AG04449 (cell line): ENCODE measurements at regions of chr7 and their contacts with region 1.

Region 1: GRCh38 chr7:40134428-40135316 is at the starts of genes MPLKIP and SUGCT:
- DNase-seq: peak; percentile 54
- H3K4me3 ChIP-seq: peak within 1 kb of the TSS; percentile 80
- CTCF ChIP-seq: peak; percentile 83

Region 2: DNA sequence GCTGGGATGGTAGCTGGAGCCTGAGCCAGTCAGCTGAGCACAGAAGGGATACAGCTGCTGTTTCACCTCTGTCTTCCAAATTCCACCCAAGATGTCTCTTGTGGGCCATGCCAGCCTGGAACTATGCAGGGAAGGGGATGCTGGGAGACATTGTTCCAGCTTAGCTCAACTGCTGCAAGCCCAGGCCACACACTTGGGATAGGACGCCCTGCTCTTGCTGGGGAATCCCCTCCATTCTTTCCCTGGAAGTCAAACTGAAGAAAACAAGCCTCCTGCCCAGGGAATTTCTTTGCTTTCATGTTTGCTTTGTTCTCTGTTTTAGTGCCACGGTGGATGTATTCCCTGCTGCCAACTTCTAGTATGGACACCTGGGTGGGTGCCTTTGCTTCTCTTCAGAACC is 239.8 kb before region 1 on chr7:
- CTCF ChIA-PET with region 1: interaction called, 14 read pairs
- POLR2A ChIA-PET with region 1: interaction called, 3 read pairs
- DNase-seq: no peak
- H3K4me3 ChIP-seq: no peak overlapping the region
- CTCF ChIP-seq: no peak

Region 3: GRCh38 chr7:40033826-40034225 is 100.8 kb before region 1 on chr7:
- CTCF ChIA-PET with region 1: no interaction called
- POLR2A ChIA-PET with region 1: no interaction called
- DNase-seq: no peak
- H3K4me3 ChIP-seq: no peak overlapping the region
- CTCF ChIP-seq: no peak

Region 4: DNA sequence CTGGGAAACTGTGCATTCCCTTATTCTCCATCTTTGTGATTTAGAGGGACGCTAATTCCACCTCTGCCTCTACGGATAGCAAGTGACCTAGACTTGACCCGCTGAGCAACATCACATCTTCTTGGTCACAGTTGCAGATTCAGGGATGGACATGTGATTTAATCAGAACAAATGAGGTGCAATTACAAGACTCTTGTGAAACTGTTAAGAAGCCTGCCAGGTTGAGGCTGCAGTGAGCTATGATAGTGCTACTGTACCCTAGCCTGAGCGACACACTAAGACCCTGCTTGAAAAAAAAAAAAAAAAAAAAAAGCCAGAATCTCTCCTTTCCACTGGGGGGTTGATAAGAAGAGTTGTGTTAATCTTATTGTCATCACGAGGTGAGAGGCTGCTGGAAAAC is 14.7 kb before region 1 on chr7:
- CTCF ChIA-PET with region 1: interaction called, 43 read pairs
- POLR2A ChIA-PET with region 1: no interaction called
- DNase-seq: no peak
- H3K4me3 ChIP-seq: no peak overlapping the region
- CTCF ChIP-seq: no peak

Region 5: GRCh38 chr7:40147371-40148246 is 12.9 kb after region 1 on chr7:
- CTCF ChIA-PET with region 1: interaction called, 19 read pairs
- POLR2A ChIA-PET with region 1: interaction called, 3 read pairs
- DNase-seq: no peak
- H3K4me3 ChIP-seq: no peak overlapping the region
- CTCF ChIP-seq: no peak

Region 6: DNA sequence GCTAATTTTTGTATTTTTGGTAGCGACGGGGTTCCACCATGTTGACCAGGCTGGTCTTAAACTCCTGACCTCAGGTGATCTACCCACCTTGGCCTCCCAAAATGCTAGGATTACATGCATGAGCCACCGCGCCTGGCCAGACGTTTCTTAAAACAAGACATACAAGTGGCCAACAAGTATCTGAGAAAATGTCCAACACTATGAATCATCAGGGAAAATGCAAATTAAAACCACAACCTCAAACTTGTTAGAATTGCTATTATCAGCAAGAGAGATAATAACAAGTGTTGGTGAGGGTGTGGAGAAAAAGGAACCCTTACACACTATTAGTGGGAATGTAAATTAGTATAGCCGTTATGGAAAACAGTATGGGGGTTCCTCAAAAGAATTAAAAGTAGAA is 148.7 kb after region 1 on chr7:
- CTCF ChIA-PET with region 1: no interaction called
- POLR2A ChIA-PET with region 1: no interaction called
- DNase-seq: no peak
- H3K4me3 ChIP-seq: no peak overlapping the region
- CTCF ChIP-seq: no peak